ENCODE measurements at regions of chr1 and their contacts with region 1.

Region 1: DNA sequence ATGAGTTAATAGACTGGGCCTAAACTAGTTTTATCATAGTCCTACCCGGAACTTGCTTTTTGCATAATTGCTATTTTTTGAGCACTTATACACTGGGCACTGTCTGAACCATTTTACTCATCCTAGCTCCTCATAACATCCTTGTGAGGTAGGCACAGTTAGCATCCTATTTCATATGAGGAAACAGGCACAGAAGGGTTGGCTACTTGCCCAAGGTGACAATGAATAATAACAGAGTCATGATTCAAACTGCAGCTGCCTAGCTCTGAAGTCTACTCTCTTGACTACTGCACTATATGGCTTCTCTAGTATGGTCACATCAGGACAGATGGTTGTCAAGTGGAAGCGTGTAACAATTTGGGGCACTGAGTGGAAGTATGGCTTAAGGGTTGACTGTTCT is 18.2 kb upstream of the RC3H1 start:
- DNase-seq: peak; percentile 50 to 85
- H3K4me3 ChIP-seq: no peak overlapping the region
- H3K27ac ChIP-seq: no peak overlapping the region
- H3K4me1 ChIP-seq: 0 out of 2 replicates have a peak, but pooled peaks cover 5% of the 10 kb centered on the region
- H3K27me3 ChIP-seq: no peaks in the 10 kb centered on the region
- CTCF ChIP-seq: no peak

Region 2: GRCh38 chr1:172476218-172476811 is 1564.1 kb before region 1 on chr1:
- CTCF ChIA-PET with region 1: no interaction called
- POLR2A ChIA-PET with region 1: interaction called, 11 read pairs
- intact Hi-C with region 1: no loop called
- DNase-seq: peak; percentile 69 to 86
- H3K4me3 ChIP-seq: no peak overlapping the region
- H3K27ac ChIP-seq: peak overlapping the region; percentile 54
- H3K4me1 ChIP-seq: peaks cover 31% of the 10 kb centered on the region
- H3K27me3 ChIP-seq: no peaks in the 10 kb centered on the region
- CTCF ChIP-seq: no peak

Region 3: DNA sequence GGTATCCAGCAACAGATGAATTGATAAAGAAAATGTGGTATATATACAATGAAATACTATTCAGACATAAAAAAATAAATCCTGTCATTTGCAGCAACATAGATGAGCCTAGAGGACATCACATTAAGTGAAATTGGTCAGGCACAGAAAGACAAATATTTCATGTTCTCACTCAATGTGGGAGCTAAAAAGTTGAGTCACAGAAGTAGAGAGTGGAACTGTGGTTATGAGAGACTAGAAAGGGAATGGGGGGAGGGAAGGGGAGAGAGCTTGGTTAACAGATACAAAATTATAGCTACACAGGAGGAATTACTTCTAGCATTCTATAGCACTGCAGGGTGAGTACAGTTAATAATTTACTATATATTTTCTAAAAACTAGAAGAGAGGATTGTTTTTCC is 86.2 kb before region 1 on chr1:
- CTCF ChIA-PET with region 1: no interaction called
- POLR2A ChIA-PET with region 1: interaction called, 13 read pairs
- intact Hi-C with region 1: no loop called
- DNase-seq: no peak
- H3K4me3 ChIP-seq: no peak overlapping the region
- H3K27ac ChIP-seq: no peak overlapping the region
- H3K4me1 ChIP-seq: no peaks in the 10 kb centered on the region
- H3K27me3 ChIP-seq: no peaks in the 10 kb centered on the region
- CTCF ChIP-seq: no peak

Region 4: DNA sequence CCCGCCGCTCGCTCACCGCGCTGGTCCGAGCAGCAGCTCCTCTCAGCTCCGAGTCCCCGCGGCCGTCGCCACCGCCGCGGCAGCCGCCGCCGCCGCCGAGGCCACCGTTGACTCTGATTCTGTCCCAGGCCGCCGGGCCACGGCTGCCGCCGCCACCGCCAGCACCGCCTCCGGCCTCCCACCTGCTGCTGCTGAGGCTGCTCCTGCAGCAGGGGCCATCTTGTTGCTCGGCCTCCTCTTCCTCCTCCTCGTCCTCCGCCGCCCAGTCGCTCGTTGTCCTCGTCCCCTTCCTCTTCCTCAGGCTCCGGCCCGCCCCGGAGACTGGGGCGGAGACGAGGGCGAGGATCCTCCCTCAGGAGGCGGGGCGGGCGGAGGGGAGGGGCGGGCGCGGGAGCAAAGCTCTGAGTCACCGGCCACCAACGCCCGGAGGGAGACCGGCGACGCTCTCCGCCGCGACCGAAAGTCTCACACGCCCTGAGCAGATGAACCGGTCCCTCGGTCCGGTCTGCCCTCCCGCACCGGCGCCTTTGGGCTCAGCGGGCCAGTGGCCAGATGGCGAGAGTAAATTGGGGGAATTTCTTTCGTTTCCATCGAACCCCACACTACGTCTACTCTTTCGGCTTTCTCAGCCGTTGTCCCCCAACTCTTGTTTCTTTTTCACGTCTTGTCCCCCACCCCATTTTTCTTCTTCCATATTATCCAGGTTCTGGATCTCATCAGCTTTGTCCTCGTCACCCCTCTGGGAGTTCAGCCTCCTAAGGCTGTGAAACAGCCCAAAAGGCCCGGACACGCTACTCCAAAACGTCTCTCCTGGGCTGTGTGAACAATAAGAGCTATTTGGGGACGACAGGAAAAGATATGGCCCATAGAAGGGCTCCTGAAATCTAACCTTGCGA is 18.1 kb before region 1 on chr1 and contains the start of gene RC3H1:
- CTCF ChIA-PET with region 1: interaction called, 3 read pairs
- POLR2A ChIA-PET with region 1: interaction called, 6 read pairs
- intact Hi-C with region 1: loop called (anchors 1 kb)
- DNase-seq: peak; percentile 80 to 90
- H3K4me3 ChIP-seq: peak within 1 kb of the TSS; percentile 76
- H3K27ac ChIP-seq: peak within 1 kb of the TSS; percentile 93
- H3K4me1 ChIP-seq: peaks cover 41% of the 10 kb centered on the region
- H3K27me3 ChIP-seq: no peaks in the 10 kb centered on the region
- CTCF ChIP-seq: no peak
- total RNA-seq, gene RC3H1: 25.2 and 29.5 TPM in 2 replicates

Measured in PC-9 (cell line).